ENCODE measurements at regions of chr11 and their contacts with region 1.

Region 1: DNA sequence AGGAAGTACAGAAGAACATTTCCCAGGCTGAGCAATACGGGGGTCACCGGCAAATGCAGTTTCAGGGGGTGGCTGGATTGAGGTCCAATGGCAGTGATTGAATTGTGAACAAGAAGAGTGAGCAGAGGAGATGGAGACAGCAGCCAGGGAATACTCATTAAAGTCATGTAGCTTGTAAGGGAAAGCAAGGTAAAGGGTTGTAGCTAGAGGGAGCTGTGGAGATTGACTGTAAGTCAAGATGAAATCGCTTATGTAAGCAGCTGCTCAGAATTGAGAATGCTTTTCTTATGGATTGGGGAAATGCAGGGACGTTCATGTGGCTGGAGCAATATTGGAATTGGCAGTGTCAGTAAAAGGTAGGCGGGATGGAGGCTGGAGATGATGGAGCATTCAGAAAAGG is 111.4 kb upstream of the TBCEL start:
- DNase-seq: no peak
- ATAC-seq: peak; percentile 75
- H3K4me3 Mint-ChIP-seq: no peak overlapping the region
- H3K27ac Mint-ChIP-seq: no peak overlapping the region
- H3K4me1 Mint-ChIP-seq: peaks cover 12% of the 10 kb centered on the region
- H3K27me3 Mint-ChIP-seq: no peaks in the 10 kb centered on the region; the same call in 1 of the 2 replicates
- CTCF ChIP-seq: no peak

Region 2: GRCh38 chr11:120794748-120795147 is 117.8 kb before region 1 on chr11:
- CTCF ChIA-PET with region 1: no interaction called
- POLR2A ChIA-PET with region 1: no interaction called
- DNase-seq: no peak
- ATAC-seq: no peak
- H3K4me3 Mint-ChIP-seq: no peak overlapping the region
- H3K27ac Mint-ChIP-seq: no peak overlapping the region
- H3K4me1 Mint-ChIP-seq: peaks cover 6% of the 10 kb centered on the region
- H3K27me3 Mint-ChIP-seq: peaks cover 8% of the 10 kb centered on the region
- CTCF ChIP-seq: no peak

Region 3: GRCh38 chr11:120883404-120884080 is 29.0 kb before region 1 on chr11:
- CTCF ChIA-PET with region 1: interaction called, 18 read pairs
- POLR2A ChIA-PET with region 1: no interaction called
- DNase-seq: no peak
- ATAC-seq: peak; percentile 50; the same call in 1 of the 2 replicates
- H3K4me3 Mint-ChIP-seq: no peak overlapping the region
- H3K27ac Mint-ChIP-seq: peak overlapping the region; percentile 50; the same call in 1 of the 2 replicates
- H3K4me1 Mint-ChIP-seq: peaks cover 12% of the 10 kb centered on the region; the same call in 1 of the 2 replicates
- H3K27me3 Mint-ChIP-seq: no peaks in the 10 kb centered on the region
- CTCF ChIP-seq: no peak

Region 4: GRCh38 chr11:120900643-120901042 is 11.9 kb before region 1 on chr11:
- CTCF ChIA-PET with region 1: interaction called, 20 read pairs
- POLR2A ChIA-PET with region 1: no interaction called
- DNase-seq: no peak
- ATAC-seq: peak; percentile 40
- H3K4me3 Mint-ChIP-seq: no peak overlapping the region
- H3K27ac Mint-ChIP-seq: no peak overlapping the region
- H3K4me1 Mint-ChIP-seq: peaks cover 9% of the 10 kb centered on the region
- H3K27me3 Mint-ChIP-seq: peaks cover 2% of the 10 kb centered on the region; the same call in 1 of the 2 replicates
- CTCF ChIP-seq: no peak

Region 5: DNA sequence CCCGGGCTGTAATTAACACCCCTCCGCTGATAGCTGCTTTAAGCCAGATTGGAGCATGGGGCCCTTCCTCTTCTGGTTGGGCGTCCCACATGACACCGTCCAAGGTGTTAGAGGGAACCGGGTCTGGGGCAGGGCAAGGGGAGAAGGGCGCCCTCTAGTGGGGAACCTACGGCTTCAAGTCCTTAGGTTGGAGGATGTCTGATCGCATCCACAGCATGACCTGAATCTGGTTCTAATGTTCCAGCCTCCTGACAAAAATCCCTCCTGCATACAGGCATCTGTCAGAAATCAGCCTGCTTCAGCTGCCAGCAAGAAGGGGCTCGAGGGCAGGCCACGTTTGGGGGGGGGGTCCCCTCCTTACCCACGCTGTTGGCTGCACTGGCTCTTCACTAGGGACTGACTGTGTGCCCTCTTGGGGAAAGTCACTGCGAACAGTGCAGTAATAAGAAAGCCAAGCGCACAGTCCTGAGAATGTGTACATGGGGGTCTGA is 17.2 kb after region 1 on chr11:
- CTCF ChIA-PET with region 1: interaction called, 41 read pairs
- POLR2A ChIA-PET with region 1: no interaction called
- DNase-seq: peak; percentile 84
- ATAC-seq: peak; percentile 88
- H3K4me3 Mint-ChIP-seq: no peak overlapping the region
- H3K27ac Mint-ChIP-seq: no peak overlapping the region
- H3K4me1 Mint-ChIP-seq: peaks cover 21% of the 10 kb centered on the region
- H3K27me3 Mint-ChIP-seq: no peaks in the 10 kb centered on the region
- CTCF ChIP-seq: peak; percentile 83

Region 6: DNA sequence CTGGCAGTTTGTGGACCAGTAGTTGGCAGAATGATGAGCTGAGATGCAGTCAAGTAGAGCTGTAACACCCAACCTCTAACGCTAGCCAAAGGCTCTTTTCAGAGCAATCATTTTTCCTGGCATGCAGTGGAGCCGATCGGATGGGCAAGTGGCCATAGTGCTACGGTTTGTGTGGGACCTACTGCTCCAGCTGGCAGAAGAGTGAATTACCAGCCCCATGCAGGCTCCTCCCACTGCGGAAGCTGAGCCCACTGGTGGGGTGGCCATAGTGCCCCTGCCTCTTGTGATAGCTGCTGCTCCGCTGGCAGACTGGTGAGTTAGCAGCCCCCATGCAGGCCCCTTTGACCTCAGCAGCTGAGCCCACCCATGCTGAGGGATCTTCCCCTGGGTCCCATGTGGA is 353.1 kb after region 1 on chr11:
- CTCF ChIA-PET with region 1: no interaction called
- POLR2A ChIA-PET with region 1: no interaction called
- DNase-seq: no peak
- ATAC-seq: peak; percentile 80
- H3K4me3 Mint-ChIP-seq: no peak overlapping the region
- H3K27ac Mint-ChIP-seq: no peak overlapping the region
- H3K4me1 Mint-ChIP-seq: peaks cover 15% of the 10 kb centered on the region
- H3K27me3 Mint-ChIP-seq: peaks cover 10% of the 10 kb centered on the region
- CTCF ChIP-seq: no peak